K562 (cell line): ENCODE measurements at regions of chr3 and their contacts with region 1.

Region 1: DNA sequence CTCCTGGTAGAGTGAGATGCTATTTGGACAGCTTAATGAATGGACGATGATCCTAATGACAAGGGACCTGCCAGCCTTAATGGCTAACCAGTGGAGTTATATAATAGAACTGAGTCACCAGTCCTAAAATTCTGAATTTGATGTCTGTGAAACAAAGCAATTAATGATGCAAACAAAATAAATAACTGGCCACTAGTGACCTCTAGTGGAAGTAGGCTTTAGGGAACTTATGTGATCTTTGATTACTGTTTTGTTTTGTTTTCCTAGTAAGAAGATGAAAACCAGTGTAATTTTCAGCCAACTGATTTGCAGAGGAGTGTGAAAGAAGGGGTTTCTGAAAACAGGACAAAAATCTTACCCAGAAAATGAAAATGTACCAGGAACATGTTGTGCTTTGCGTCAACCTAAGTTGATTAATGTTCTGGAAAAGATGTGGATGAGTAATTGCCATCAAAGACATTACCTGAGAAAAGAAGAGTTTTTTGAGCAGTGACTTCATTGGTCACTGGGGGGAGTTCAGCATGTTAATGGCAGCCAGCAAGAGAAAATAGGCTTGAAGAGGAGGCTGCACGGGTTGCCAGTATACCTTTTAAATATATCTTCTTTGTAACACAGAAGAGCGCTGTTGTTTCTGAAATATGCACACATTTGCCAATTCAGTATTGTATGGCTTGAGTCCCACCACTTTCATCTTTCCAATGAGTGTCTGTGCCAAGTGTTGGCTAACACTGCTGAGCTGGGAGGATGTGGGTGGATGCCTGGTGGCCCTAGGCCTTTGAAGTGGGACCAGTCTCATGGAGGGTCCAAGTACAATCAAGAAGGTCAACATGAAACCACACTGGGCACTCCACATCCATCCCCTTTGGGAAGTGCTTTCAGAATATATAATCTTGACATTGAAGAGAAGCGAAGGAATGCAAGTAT is 9.3 kb downstream of the VEPH1 start:
- DNase-seq: peak; percentile 14 to 52 (median 16)
- ATAC-seq: peak; percentile 45; the same call in 1 of the 3 replicates
- H3K4me3 ChIP-seq: no peak overlapping the region
- H3K27ac ChIP-seq: no peak overlapping the region
- H3K4me1 ChIP-seq: no peaks in the 10 kb centered on the region
- H3K27me3 ChIP-seq: no peaks in the 10 kb centered on the region; a peak in 1 of 5 replicates
- CTCF ChIP-seq: peak; percentile 45 to 72 (median 53); a peak in 5 of 6 replicates
- EP300 ChIP-seq: no peak
- POLR2A ChIP-seq: no peak
- RAD21 ChIP-seq: peak; percentile 80 to 84

Region 2: DNA sequence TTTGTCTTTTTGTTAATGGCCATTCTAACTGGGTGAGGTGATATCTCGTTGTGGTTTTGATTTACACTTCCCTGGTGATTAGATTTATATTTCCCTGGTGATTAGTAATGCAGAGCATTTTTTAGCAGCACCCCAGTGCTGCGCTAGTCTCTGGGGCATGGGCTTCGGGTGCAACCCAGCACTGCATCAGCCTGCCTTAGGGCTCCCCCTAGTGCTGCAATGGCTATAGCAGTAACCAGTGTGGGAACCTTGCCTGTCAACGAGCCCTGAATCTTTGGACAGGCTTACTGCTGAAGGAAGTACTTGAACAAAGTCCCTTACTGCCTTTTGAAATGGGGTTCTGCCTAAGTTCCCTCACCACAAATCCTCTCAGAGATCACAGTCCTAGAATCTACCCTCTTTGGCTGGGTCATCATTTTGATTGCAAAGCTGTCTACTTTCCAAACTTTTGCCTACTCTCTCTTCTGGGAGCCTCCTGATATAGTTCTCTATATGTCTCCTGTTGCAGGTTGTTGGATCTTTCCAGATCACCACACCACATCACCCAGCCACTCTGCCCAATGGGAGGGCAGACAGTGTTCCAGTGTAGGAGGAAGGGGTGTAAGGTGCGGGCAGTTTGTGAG is 254.7 kb before region 1 on chr3:
- CTCF ChIA-PET with region 1: no interaction called
- POLR2A ChIA-PET with region 1: no interaction called
- in situ Hi-C with region 1: no loop called
- intact Hi-C with region 1: loop called (anchors 10 kb)
- DNase-seq: peak; percentile 48 to 79 (median 60)
- ATAC-seq: peak; percentile 99
- H3K4me3 ChIP-seq: no peak overlapping the region
- H3K27ac ChIP-seq: no peak overlapping the region
- H3K4me1 ChIP-seq: peaks cover 0 to 6% of the 10 kb centered on the region in 2 experiments; a peak in 1 of 5 replicates
- H3K27me3 ChIP-seq: no peaks in the 10 kb centered on the region
- CTCF ChIP-seq: peak; percentile 88 to 92 (median 91)
- EP300 ChIP-seq: no peak
- POLR2A ChIP-seq: no peak
- RAD21 ChIP-seq: peak; percentile 91 to 94

Region 3: GRCh38 chr3:157373783-157374182 is 120.1 kb before region 1 on chr3:
- CTCF ChIA-PET with region 1: no interaction called
- POLR2A ChIA-PET with region 1: no interaction called
- in situ Hi-C with region 1: no loop called
- intact Hi-C with region 1: no loop called
- DNase-seq: no peak
- ATAC-seq: no peak
- H3K4me3 ChIP-seq: no peak overlapping the region
- H3K27ac ChIP-seq: no peak overlapping the region
- H3K4me1 ChIP-seq: no peaks in the 10 kb centered on the region
- H3K27me3 ChIP-seq: peaks cover 0 to 4% of the 10 kb centered on the region in 2 experiments; a peak in 1 of 5 replicates
- CTCF ChIP-seq: no peak
- EP300 ChIP-seq: no peak
- POLR2A ChIP-seq: no peak
- RAD21 ChIP-seq: no peak

Region 4: GRCh38 chr3:157566596-157566995 is 72.7 kb after region 1 on chr3:
- CTCF ChIA-PET with region 1: no interaction called
- POLR2A ChIA-PET with region 1: no interaction called
- in situ Hi-C with region 1: no loop called
- intact Hi-C with region 1: no loop called
- DNase-seq: no peak
- ATAC-seq: no peak
- H3K4me3 ChIP-seq: no peak overlapping the region
- H3K27ac ChIP-seq: no peak overlapping the region
- H3K4me1 ChIP-seq: no peaks in the 10 kb centered on the region
- H3K27me3 ChIP-seq: no peaks in the 10 kb centered on the region
- CTCF ChIP-seq: no peak
- EP300 ChIP-seq: no peak
- POLR2A ChIP-seq: no peak
- RAD21 ChIP-seq: no peak

Region 5: DNA sequence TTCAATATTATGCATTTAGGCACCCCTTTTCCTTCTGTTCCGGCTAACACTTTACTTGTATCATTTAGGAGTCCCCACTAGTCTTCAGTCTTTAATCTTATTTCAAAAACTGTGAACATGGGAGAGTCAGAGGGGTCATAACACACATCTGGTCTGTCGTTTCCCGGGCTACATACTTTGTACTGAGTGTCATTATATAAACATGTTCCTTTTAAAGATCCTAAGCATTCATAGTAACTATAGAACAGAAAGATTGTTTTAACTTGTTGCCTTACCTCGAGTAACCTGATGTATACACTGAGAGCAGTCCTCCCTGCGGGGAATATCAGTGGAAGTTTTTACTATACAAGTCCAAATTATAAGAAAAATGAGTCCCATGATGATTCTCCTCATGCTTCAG is 87.5 kb after region 1 on chr3:
- CTCF ChIA-PET with region 1: no interaction called
- POLR2A ChIA-PET with region 1: no interaction called
- in situ Hi-C with region 1: no loop called
- intact Hi-C with region 1: no loop called
- DNase-seq: no peak
- ATAC-seq: no peak
- H3K4me3 ChIP-seq: no peak overlapping the region
- H3K27ac ChIP-seq: no peak overlapping the region
- H3K4me1 ChIP-seq: peaks cover 0 to 6% of the 10 kb centered on the region in 2 experiments; a peak in 3 of 5 replicates
- H3K27me3 ChIP-seq: no peaks in the 10 kb centered on the region
- CTCF ChIP-seq: no peak
- EP300 ChIP-seq: no peak
- POLR2A ChIP-seq: no peak
- RAD21 ChIP-seq: no peak